HCT116 (cell line): ENCODE measurements at regions of chr16 and their contacts with region 1.

Region 1: DNA sequence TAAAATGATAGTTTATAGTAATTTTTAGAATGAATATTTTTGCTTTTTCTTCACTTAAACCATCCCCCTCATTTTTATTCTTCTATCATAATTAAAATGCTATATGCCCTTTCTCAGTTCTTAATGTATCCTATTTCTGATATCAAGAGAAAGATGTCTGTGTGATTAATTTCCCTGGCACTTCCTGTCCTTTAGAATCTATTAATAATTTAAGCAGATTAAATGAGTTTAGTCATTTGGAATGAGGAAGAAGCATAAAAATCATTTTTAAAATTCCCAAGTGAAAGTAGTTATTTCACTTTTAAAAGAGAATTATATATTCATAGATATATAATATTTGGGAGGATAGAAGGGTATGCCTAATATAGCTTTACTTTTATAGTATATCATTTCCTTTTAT is 27.8 kb upstream of the CDR2 start:
- DNase-seq: no peak
- ATAC-seq: no peak
- H3K4me3 ChIP-seq: peak overlapping the region in 1 of 2 experiments; percentile 32; a peak in 2 of 4 replicates
- H3K27ac ChIP-seq: peak overlapping the region; percentile 45; the same call in 1 of the 2 replicates
- H3K4me1 ChIP-seq: peaks cover 34 to 35% of the 10 kb centered on the region in 2 experiments
- H3K27me3 ChIP-seq: no peaks in the 10 kb centered on the region
- CTCF ChIP-seq: no peak
- POLR2A ChIP-seq: no peak
- RAD21 ChIP-seq: no peak

Region 2: GRCh38 chr16:22232277-22233042 is 169.7 kb before region 1 on chr16:
- CTCF ChIA-PET with region 1: no interaction called
- POLR2A ChIA-PET with region 1: no interaction called
- RAD21 ChIA-PET with region 1: no interaction called
- intact Hi-C with region 1: no loop called
- DNase-seq: peak; percentile 92
- ATAC-seq: peak; percentile 94
- H3K4me3 ChIP-seq: peak overlapping the region; percentile 7 to 31
- H3K27ac ChIP-seq: peak overlapping the region; percentile 76
- H3K4me1 ChIP-seq: peaks cover 28 to 32% of the 10 kb centered on the region in 2 experiments
- H3K27me3 ChIP-seq: no peaks in the 10 kb centered on the region
- CTCF ChIP-seq: no peak
- POLR2A ChIP-seq: no peak
- RAD21 ChIP-seq: no peak

Region 3: GRCh38 chr16:22623351-22623781 is 221.2 kb after region 1 on chr16:
- CTCF ChIA-PET with region 1: no interaction called
- POLR2A ChIA-PET with region 1: no interaction called
- RAD21 ChIA-PET with region 1: no interaction called
- intact Hi-C with region 1: loop called (anchors 10 kb)
- DNase-seq: no peak
- ATAC-seq: no peak
- H3K4me3 ChIP-seq: no peak overlapping the region
- H3K27ac ChIP-seq: no peak overlapping the region
- H3K4me1 ChIP-seq: no peaks in the 10 kb centered on the region
- H3K27me3 ChIP-seq: peaks cover 33% of the 10 kb centered on the region
- CTCF ChIP-seq: no peak
- POLR2A ChIP-seq: no peak
- RAD21 ChIP-seq: no peak